Ascending aorta (tissue), 2 donors: ENCODE measurements at regions of chr19 and their contacts with region 1.

Region 1: GRCh38 chr19:14006243-14006765 is at the start of gene RFX1:
- DNase-seq: peak; percentile 98 to 100
- H3K4me3 ChIP-seq: peak within 1 kb of the TSS; percentile 99 to 100
- H3K27ac ChIP-seq: peak within 1 kb of the TSS; percentile 100
- H3K4me1 ChIP-seq: peaks cover 16 to 23% of the 10 kb centered on the region in 2 donors
- H3K27me3 ChIP-seq: no peaks in the 10 kb centered on the region
- CTCF ChIP-seq: no peak
- total RNA-seq, gene RFX1: 3.3 TPM

Region 2: DNA sequence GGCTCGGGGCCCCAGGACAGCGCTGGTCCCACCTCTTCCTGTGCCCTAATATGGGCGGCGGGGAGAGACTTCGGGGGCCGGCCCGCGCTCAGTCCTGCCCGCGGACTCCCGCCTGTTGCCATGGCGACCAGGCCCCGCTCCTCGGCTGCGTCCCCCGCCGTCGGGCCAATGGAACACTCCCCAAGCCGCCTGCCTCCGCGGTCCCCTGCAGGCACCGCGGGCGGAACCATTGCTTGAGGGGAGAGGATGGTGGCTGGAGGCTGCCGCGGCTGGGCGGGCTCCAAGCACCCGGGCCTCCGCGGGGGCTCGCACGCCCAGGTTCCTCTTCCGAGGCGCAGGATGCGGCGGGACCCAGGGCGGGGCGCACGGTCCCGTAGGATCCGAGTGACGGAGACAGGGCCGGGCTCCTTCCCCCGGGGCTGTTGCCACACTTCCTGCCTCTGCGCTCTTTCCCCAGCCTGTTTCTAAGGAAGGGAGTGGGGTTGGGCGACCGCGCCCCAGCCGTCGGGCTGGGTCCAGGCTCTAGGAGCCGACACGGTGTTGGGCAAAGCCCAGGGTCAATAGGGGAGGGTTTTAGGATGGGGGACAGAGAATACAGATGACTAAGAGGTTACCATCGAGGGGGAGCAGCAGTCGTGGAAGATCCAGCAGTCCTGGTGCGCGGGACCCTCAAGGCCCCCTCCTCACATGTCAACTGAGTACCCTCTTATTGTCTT is 1216.2 kb before region 1 on chr19:
- intact Hi-C with region 1: loop called (anchors 10 kb)
- DNase-seq: peak; percentile 92 to 98
- H3K4me3 ChIP-seq: peak overlapping the region; percentile 83 to 90
- H3K27ac ChIP-seq: peak overlapping the region; percentile 95 to 96
- H3K4me1 ChIP-seq: peaks cover 31 to 41% of the 10 kb centered on the region in 2 donors
- H3K27me3 ChIP-seq: no peaks in the 10 kb centered on the region
- CTCF ChIP-seq: no peak

Region 3: DNA sequence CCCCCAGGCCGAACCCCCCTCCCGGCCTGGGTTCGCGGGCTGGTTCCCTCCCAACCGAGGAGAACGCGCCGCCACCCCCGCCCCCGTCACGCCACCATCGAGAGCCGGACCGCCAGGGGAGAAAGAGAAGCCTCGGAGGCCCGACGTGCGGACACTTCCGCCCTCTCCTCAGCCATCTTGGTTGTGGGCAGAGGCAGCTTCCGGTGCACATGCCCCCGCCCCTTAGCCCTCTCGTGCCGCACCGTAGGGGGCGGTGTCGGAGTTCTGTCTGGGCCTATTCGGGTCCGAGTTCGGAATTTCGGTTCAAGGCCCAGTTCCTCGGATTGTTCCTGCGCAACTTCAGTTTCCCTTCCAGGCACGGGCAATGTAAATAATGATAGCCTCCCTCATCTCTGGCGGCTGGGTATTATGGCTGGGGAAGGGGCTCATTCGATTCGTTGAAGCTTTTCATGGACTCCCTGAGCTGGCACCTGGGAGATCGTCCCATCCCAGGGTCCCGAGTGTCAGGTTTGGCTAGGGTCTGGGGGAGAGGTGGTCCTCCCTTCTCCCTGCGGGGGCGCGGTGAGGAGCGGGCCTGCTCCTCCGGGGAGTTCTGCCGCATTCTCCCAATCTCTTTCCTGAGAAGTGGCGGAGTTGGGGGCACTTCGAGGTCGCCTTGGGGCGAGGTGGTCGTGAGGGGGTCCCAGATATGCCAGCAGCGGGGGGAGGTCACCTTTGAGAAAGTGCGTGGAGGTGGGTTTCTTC is 855.9 kb before region 1 on chr19 and contains the starts of genes IER2 and STX10:
- intact Hi-C with region 1: loop called (anchors 10 kb)
- DNase-seq: peak; percentile 86 to 98
- H3K4me3 ChIP-seq: peak within 1 kb of the TSS; percentile 92 to 97
- H3K27ac ChIP-seq: peak within 1 kb of the TSS; percentile 99
- H3K4me1 ChIP-seq: peaks cover 5 to 8% of the 10 kb centered on the region in 2 donors
- H3K27me3 ChIP-seq: no peaks in the 10 kb centered on the region
- CTCF ChIP-seq: peak; percentile 47 to 56 (median 55)
- total RNA-seq, gene IER2: 907 TPM
- total RNA-seq, gene STX10: 31.6 TPM

Region 4: DNA sequence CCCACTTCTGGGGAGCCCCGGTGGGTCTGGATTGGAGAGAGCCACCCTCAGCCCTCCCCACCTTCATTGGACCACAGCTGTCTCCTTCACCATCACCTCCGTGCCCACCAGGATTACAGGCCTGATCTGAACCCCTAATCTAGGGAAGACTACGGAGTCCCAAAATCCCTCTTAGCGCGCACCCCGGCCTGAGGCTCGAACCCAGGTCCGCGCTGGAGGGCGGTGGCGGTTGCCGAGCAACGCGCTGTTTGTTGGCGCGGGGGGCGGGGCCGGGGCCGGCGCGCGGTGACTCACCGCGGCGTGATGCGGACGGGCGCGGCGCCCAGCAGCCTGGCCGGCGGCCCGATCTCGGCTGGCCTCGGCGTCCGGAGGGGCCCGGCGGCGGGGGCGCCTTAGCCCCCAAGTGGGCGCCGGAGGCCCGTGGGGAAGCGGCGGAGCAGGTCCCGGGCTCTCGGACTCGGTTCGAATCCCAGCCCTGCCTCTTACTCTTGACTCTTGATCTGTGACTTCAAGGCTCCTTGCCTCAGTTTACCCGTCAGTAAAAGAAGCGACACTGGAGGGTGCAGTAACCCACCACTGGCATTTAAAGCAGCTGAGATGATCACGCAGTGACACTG is 155.9 kb before region 1 on chr19:
- intact Hi-C with region 1: no loop called
- DNase-seq: peak in 1 of 2 donors; percentile 90
- H3K4me3 ChIP-seq: peak overlapping the region; percentile 31 to 54
- H3K27ac ChIP-seq: peak overlapping the region; percentile 99 to 100
- H3K4me1 ChIP-seq: peaks cover 16 to 62% of the 10 kb centered on the region in 2 donors
- H3K27me3 ChIP-seq: no peaks in the 10 kb centered on the region
- CTCF ChIP-seq: no peak

Region 5: GRCh38 chr19:13905938-13906904 is 100.1 kb before region 1 on chr19 and contains the starts of genes BRME1 and CC2D1A:
- intact Hi-C with region 1: loop called (anchors 2 kb)
- DNase-seq: peak; percentile 60 to 94
- H3K4me3 ChIP-seq: peak within 1 kb of the TSS; percentile 70 to 96
- H3K27ac ChIP-seq: peak within 1 kb of the TSS; percentile 9 to 60
- H3K4me1 ChIP-seq: peaks cover 4 to 13% of the 10 kb centered on the region in 2 donors
- H3K27me3 ChIP-seq: no peaks in the 10 kb centered on the region
- CTCF ChIP-seq: no peak
- total RNA-seq, gene BRME1: not detected
- total RNA-seq, gene CC2D1A: 128 TPM

Region 6: DNA sequence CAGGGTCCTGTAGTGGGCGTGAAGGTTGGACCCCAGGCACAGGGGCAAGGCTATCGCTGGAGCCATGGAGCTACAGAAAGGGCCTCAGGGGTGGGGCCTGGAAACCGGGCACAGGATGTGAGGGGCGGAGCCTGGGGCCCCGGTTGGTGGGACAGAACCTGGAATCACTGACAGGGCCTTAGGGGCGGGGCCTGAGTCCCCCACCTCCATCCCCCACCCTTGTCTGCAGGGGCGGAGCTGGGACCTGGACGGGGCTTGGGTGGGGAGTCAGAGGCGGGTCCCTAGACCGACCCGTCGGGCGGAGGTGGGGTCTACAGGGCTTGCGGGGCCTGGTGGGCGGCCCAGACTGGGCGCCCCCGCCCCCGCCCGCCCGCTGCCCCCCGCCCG is 28.0 kb before region 1 on chr19:
- intact Hi-C with region 1: loop called (anchors 2 kb)
- DNase-seq: peak; percentile 60 to 89
- H3K4me3 ChIP-seq: peak overlapping the region; percentile 58 to 75
- H3K27ac ChIP-seq: peak overlapping the region; percentile 56 to 59
- H3K4me1 ChIP-seq: peaks cover 4 to 18% of the 10 kb centered on the region in 2 donors
- H3K27me3 ChIP-seq: no peaks in the 10 kb centered on the region
- CTCF ChIP-seq: no peak

Region 7: GRCh38 chr19:14117668-14118164 is 111.4 kb after region 1 on chr19 and contains the start of gene PRKACA:
- intact Hi-C with region 1: loop called (anchors 5 kb)
- DNase-seq: peak; percentile 97 to 99
- H3K4me3 ChIP-seq: peak within 1 kb of the TSS; percentile 71 to 96
- H3K27ac ChIP-seq: peak within 1 kb of the TSS; percentile 92 to 99
- H3K4me1 ChIP-seq: peaks cover 23 to 51% of the 10 kb centered on the region in 2 donors
- H3K27me3 ChIP-seq: no peaks in the 10 kb centered on the region
- CTCF ChIP-seq: no peak
- total RNA-seq, gene PRKACA: 92.6 TPM